ENCODE measurements at regions of chr10 and their contacts with region 1.

Region 1: DNA sequence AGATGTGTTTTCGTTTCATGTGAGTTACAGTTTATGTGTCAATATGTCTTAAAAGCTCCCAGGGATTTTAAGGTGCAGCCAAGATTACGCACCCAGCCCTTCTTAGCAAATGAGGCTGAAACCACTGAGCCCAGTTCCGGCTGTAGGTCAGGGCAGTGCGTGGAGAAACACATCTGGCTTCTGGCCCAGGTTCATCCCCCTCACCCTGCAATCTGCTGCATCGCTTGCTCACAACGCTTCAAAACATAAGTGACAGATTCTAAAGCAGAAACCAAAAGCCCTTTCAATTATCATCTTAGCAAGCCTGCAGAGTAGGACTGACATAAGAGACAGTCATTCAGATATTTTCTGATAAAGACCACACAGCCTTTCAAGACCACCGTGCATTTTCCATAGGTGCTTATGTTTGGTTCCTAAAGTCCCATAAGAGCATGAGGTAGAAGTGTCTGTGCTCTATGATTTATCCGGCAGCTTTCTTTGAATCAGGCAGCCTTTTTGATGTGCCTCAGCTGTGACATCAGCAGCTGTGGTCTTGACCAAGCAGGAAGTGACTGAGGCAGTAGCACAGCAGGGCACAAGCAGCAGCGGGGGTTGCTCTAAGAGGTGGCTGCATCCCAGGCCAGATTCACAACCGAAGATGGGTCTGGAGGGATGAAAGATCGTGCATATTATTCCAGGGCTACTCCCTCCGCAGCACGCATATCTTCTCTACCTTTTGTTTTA is 72.1 kb upstream of the LYZL2 start:
- DNase-seq: peak; percentile 82
- ATAC-seq: peak; percentile 76
- H3K4me3 Mint-ChIP-seq: peak overlapping the region; percentile 89
- H3K27ac Mint-ChIP-seq: peak overlapping the region; percentile 99
- H3K4me1 Mint-ChIP-seq: peaks cover 93% of the 10 kb centered on the region
- H3K27me3 Mint-ChIP-seq: no peaks in the 10 kb centered on the region

Region 2: DNA sequence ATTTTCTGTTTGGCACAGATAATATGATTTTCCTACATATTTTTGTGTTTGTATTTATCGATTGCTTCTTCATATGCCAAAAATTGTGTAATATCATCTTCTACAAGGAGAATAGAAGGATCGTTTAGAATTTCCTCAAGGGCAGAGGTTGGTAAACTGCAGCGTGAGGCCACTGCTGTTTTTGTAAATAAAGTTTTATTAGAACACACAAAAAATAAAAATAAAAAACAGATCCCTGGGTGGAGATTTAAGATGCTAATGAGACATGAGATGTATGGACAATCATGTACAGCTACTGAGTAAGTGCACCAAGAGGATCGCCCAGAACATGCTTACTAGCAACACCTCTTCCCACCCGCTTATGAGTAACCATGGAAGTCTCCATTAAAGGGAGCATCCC is 81.6 kb before region 1 on chr10:
- CTCF ChIA-PET with region 1: no interaction called
- POLR2A ChIA-PET with region 1: no interaction called
- DNase-seq: no peak
- ATAC-seq: no peak
- H3K4me3 Mint-ChIP-seq: no peak overlapping the region
- H3K27ac Mint-ChIP-seq: no peak overlapping the region
- H3K4me1 Mint-ChIP-seq: no peaks in the 10 kb centered on the region
- H3K27me3 Mint-ChIP-seq: peaks cover 25% of the 10 kb centered on the region

Region 3: DNA sequence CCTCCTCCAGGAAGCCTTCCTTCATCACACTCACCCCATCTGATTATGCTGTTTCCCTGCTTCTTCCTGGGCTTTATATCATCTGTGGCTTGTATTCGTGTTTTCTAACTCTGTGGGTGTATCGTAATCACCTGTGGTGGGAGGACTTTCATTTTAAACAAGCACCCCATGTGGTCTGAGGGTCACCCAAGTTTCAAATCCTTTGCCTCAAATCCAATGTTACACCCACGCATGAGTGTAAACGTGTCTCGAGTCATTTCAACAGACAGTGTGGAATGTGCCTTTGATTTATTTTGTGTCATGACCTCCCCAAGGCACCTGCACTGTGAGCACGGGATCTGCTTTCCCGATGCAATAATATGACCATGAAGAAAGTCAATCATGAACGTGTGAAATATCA is 54.5 kb before region 1 on chr10:
- CTCF ChIA-PET with region 1: no interaction called
- POLR2A ChIA-PET with region 1: no interaction called
- DNase-seq: no peak
- ATAC-seq: no peak
- H3K4me3 Mint-ChIP-seq: no peak overlapping the region
- H3K27ac Mint-ChIP-seq: no peak overlapping the region
- H3K4me1 Mint-ChIP-seq: peaks cover 4% of the 10 kb centered on the region
- H3K27me3 Mint-ChIP-seq: peaks cover 44% of the 10 kb centered on the region

Region 4: DNA sequence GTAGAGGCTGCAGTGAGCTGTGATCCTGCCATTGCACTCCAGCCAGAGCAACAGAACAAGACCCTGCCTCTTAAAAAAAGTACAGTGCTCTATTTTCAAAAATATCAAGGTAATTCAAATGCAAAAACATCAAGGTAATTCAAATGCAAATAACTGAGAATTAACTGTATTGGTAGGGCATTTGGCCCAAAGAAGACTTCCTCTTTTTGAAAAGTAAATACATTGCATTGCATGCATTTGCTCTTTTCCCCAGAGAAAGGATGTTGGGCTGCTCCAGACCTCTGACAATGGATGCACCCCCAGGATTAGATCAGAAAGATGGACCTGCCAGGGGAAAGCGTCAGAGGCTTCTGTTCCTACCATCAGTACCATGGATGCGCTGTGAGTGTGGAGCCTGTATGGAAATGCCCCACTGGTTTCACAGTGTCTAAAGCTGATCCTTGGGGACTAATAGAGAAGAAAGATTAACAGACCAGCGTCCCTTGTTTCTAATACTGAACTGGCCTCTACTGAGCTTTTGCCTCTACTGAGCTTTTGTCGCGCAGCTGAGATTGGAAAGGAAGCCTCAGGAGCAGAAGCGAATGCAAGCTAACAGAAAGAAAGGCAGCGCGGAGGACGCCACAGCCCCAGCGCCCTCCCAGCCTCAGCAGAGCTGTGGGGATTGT is 21.5 kb after region 1 on chr10:
- CTCF ChIA-PET with region 1: interaction called, 11 read pairs
- POLR2A ChIA-PET with region 1: no interaction called
- DNase-seq: no peak
- ATAC-seq: no peak
- H3K4me3 Mint-ChIP-seq: no peak overlapping the region
- H3K27ac Mint-ChIP-seq: no peak overlapping the region
- H3K4me1 Mint-ChIP-seq: peaks cover 8% of the 10 kb centered on the region
- H3K27me3 Mint-ChIP-seq: peaks cover 9% of the 10 kb centered on the region

Region 5: DNA sequence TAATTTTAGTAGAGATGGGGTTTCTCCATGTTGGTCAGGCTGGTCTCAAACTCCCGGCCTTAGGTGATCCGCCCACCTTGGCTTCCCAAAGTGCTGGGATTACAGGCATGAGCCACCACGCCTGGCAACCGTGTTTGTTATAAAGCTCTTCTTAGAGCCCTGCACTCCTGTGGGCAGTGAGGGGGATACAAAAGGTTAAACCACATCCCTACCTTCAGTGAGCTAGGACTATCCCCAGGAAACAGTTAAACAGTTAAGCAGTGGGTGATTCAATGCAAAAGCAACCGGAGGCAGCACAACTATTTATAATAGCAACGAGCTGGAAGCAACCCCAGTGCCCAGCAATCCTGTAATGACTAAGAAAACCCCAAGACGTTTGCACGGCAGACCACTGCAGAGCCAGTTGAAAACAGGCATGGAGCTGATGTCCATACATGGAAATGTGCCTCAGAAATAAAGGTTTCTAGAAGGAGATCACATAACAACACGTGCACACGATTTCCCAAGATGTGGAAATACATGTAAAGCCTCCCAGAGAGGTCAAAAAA is 35.1 kb after region 1 on chr10:
- CTCF ChIA-PET with region 1: no interaction called
- POLR2A ChIA-PET with region 1: interaction called, 13 read pairs
- DNase-seq: peak; percentile 64
- ATAC-seq: peak; percentile 87
- H3K4me3 Mint-ChIP-seq: no peak overlapping the region
- H3K27ac Mint-ChIP-seq: peak overlapping the region; percentile 17
- H3K4me1 Mint-ChIP-seq: peaks cover 25% of the 10 kb centered on the region
- H3K27me3 Mint-ChIP-seq: no peaks in the 10 kb centered on the region

Measured in activated CD8-positive, alpha-beta T cell treated with anti-CD3 and anti-CD28 coated beads, Interleukin-2, amount 10 ng/mL, durations not matched to agents 7 days and 5 days (primary cell).